Activated CD8-positive, alpha-beta T cell treated with anti-CD3 and anti-CD28 coated beads for 36 hours (primary cell): ENCODE measurements at regions of chr10 and their contacts with region 1.

Region 1: DNA sequence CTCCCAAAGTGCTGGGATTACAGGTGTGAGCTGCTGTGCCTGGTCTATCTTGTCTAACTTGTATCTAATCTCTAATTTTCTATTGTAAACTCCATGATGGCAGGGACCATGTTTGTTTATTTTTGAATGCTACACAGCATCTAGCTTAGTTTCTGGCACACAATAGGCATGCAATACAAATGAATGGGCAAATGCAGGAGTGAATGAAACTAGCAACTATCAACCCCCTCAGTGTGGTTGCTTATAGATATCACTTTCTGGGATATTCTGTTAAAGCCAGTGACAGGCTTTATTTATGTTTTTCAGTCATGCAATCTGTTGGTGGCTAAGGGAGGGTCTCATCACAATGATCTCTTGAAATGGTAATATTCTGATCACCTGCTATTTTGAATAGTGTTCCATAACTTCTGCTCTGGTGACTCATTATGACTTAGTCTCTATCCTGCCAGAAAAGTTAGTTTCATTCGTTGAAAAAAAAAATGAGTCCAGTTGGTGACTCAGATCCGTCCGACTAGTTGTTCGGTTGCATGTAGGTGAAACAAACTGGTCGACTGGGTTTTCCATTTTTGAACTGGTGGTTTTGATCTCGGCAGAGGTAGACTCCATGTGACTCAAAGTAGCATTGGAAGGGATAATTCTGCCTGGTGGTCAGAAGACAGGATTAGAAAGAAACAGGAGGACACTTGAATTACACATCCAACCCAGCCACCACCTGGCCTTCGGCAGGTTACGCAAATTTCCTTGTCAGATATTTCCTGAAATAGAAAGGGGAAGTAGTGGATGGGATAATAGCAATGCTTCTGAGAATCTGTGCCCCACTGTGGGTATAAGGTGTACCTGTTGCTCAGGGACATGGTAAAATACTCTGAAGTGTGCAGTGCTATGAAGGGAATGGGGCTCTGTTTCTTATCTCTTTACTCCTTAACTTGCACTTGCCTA is 76.8 kb downstream of the GATA3 start:
- DNase-seq: peak; percentile 64
- ATAC-seq: peak; percentile 74
- H3K4me3 Mint-ChIP-seq: peak overlapping the region; percentile 6
- H3K27ac Mint-ChIP-seq: peak overlapping the region; percentile 74
- H3K4me1 Mint-ChIP-seq: peaks cover 38% of the 10 kb centered on the region
- H3K27me3 Mint-ChIP-seq: peaks cover 13% of the 10 kb centered on the region
- CTCF ChIP-seq: no peak

Region 2: GRCh38 chr10:8026346-8027240 is 104.6 kb before region 1 on chr10:
- CTCF ChIA-PET with region 1: no interaction called
- POLR2A ChIA-PET with region 1: no interaction called
- intact Hi-C with region 1: no loop called
- DNase-seq: no peak
- ATAC-seq: no peak
- H3K4me3 Mint-ChIP-seq: peak overlapping the region; percentile 51
- H3K27ac Mint-ChIP-seq: no peak overlapping the region
- H3K4me1 Mint-ChIP-seq: peaks cover 5% of the 10 kb centered on the region
- H3K27me3 Mint-ChIP-seq: peaks cover 22% of the 10 kb centered on the region
- CTCF ChIP-seq: no peak

Region 3: GRCh38 chr10:8059959-8060703 is 71.1 kb before region 1 on chr10:
- CTCF ChIA-PET with region 1: no interaction called
- POLR2A ChIA-PET with region 1: interaction called, 3 read pairs
- intact Hi-C with region 1: loop called (anchors 5 kb)
- DNase-seq: peak; percentile 81
- ATAC-seq: peak; percentile 37
- H3K4me3 Mint-ChIP-seq: peak overlapping the region; percentile 89
- H3K27ac Mint-ChIP-seq: peak overlapping the region; percentile 98
- H3K4me1 Mint-ChIP-seq: peaks cover 74% of the 10 kb centered on the region
- H3K27me3 Mint-ChIP-seq: no peaks in the 10 kb centered on the region
- CTCF ChIP-seq: no peak

Region 4: GRCh38 chr10:8245131-8245813 is 114.0 kb after region 1 on chr10:
- CTCF ChIA-PET with region 1: no interaction called
- POLR2A ChIA-PET with region 1: no interaction called
- intact Hi-C with region 1: loop called (anchors 5 kb)
- DNase-seq: peak; percentile 22
- ATAC-seq: no peak
- H3K4me3 Mint-ChIP-seq: peak overlapping the region; percentile 49
- H3K27ac Mint-ChIP-seq: peak overlapping the region; percentile 79
- H3K4me1 Mint-ChIP-seq: peaks cover 53% of the 10 kb centered on the region
- H3K27me3 Mint-ChIP-seq: no peaks in the 10 kb centered on the region
- CTCF ChIP-seq: no peak

Region 5: DNA sequence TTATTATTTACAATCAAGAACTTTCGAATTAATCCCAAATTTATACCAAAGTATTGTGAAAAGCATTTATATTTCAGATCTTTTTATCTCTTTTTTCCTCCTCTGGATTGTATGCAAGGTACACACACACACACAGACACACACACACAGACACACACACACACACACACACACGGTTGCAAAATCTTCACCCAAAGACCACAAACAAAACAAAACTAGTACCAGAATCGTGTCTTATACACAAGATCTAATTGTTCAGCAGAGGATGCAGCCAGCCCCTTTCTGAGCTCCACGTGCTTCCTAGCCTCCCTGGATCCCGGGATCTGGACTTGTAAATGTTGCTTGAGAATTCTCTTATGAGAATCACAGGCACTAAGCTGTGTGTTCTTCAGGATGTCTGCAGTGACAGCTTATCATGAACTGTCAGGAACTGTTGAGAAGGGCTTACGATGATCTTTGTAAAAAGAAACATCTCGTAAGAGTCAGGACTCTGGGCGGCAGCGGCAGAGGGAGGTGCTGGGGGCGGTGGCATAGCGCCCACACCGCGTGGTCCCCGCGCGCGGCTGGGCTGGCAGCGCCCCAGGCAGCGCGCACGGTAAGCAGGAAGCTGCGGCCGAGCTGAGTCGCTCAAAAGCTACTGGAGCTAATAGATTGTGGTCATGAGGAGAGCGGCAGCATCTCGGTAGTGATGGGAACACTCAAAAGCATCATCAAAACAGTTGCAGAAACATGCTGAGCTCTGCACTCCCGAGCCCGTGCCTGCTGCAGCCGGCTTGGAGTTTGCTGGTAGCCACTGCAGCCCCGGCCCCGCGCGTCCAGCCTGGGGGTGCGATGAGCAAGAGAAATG is 200.9 kb after region 1 on chr10:
- CTCF ChIA-PET with region 1: no interaction called
- POLR2A ChIA-PET with region 1: interaction called, 3 read pairs
- intact Hi-C with region 1: loop called (anchors 5 kb)
- DNase-seq: peak; percentile 88
- ATAC-seq: peak; percentile 95
- H3K4me3 Mint-ChIP-seq: peak overlapping the region; percentile 73
- H3K27ac Mint-ChIP-seq: peak overlapping the region; percentile 84
- H3K4me1 Mint-ChIP-seq: peaks cover 37% of the 10 kb centered on the region
- H3K27me3 Mint-ChIP-seq: no peaks in the 10 kb centered on the region
- CTCF ChIP-seq: no peak

Region 6: DNA sequence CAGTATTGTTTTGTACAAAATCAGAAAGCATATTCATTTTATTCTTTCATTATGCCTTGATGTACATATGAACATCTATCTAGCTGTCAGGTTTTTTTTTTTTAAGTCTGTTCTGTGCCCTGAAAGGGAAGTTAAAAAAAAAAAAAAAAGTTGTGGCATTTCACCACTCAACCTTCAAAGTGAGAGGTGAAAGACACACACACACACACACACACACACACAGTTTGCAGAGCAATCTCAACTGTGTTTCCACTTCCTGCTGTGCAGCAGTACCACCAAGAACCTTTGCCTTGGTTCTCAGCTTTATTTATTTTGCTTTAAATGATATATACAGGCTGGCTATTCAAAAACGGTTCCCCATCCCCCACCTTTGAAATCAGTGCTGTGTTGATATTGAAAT is 878.9 kb after region 1 on chr10:
- CTCF ChIA-PET with region 1: no interaction called
- POLR2A ChIA-PET with region 1: no interaction called
- intact Hi-C with region 1: loop called (anchors 10 kb)
- DNase-seq: peak; percentile 71
- ATAC-seq: peak; percentile 76
- H3K4me3 Mint-ChIP-seq: peak overlapping the region; percentile 40
- H3K27ac Mint-ChIP-seq: peak overlapping the region; percentile 87
- H3K4me1 Mint-ChIP-seq: peaks cover 66% of the 10 kb centered on the region
- H3K27me3 Mint-ChIP-seq: no peaks in the 10 kb centered on the region
- CTCF ChIP-seq: no peak